ENCODE measurements at regions of chr21 and their contacts with region 1.

Region 1: DNA sequence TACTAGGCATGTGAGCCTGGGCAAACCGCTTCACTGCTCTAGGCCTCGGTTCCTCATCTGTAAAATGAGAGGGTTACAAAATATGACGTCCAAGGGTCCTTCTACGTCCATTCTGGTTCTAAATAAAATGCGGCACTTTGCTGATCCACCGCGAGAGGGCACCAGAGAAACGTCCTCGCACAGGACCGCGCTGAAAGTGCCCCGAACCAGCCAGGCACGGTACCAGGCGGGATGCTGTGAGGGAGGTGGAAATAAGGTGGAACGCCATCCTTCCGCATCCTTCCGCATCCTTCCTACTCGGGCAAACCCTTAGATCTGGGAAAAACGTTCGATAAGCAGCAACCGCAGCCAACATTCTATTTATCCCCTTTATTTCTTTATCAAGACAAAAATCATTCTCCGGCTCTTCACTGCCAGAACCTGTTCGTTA is 60.3 kb upstream of the KRTAP19-8 start:
- DNase-seq: peak; percentile 63
- H3K4me3 ChIP-seq: no peak overlapping the region
- H3K27ac ChIP-seq: no peak overlapping the region
- H3K4me1 ChIP-seq: peaks cover 0 to 8% (median 0%) of the 10 kb centered on the region in 4 donors
- H3K27me3 ChIP-seq: no peaks in the 10 kb centered on the region
- CTCF ChIP-seq: peak; percentile 59 to 84 (median 73)
- EP300 ChIP-seq: no peak
- POLR2A ChIP-seq: no peak

Region 2: GRCh38 chr21:30044445-30045064 is 1054.0 kb before region 1 on chr21:
- in situ Hi-C with region 1: loop called in 1 of 4 experiments (anchors 25 kb)
- intact Hi-C with region 1: no loop called
- DNase-seq: no peak
- H3K4me3 ChIP-seq: no peak overlapping the region
- H3K27ac ChIP-seq: no peak overlapping the region
- H3K4me1 ChIP-seq: no peaks in the 10 kb centered on the region
- H3K27me3 ChIP-seq: no peaks in the 10 kb centered on the region
- CTCF ChIP-seq: peak; percentile 65 to 88 (median 76)
- EP300 ChIP-seq: no peak
- POLR2A ChIP-seq: no peak

Region 3: DNA sequence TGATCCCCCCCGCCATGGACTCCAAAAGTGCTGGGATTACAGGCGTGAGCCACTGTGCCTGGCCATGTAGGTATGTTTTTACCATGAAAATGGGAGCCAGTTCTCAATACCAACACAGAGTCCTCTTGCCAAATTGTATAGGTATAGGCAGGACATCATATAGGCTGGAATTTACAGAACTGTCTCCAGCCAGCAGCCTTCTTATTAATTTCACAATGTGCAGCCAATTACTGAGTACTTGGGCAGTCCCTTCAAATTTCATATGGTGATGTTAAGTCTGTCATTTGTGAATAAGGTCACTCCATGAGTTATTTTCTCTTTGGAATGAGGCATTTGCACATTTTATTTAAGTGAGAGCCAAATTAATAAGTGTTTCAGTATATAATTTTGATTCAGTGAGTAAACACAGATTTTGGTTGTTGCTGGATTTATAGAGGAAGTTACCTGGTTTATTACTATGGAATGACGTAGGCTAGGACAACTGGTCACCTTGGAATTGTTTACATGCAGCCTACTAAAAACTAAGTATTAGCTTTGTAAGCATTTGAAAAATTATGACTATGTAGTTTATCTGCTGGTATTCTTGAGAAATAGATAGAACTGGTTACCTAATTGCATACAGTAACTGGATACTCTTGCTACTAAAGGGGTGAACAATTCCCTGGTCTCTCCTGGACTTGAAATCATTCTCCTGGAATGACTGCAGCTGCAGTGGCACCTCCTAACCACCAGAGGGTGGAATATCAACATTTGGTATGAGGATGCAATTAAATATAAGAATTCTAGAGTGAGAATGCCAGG is 758.0 kb before region 1 on chr21:
- in situ Hi-C with region 1: loop called in 1 of 4 experiments (anchors 25 kb)
- intact Hi-C with region 1: no loop called
- DNase-seq: peak; percentile 41
- H3K4me3 ChIP-seq: no peak overlapping the region
- H3K27ac ChIP-seq: no peak overlapping the region
- H3K4me1 ChIP-seq: no peaks in the 10 kb centered on the region
- H3K27me3 ChIP-seq: no peaks in the 10 kb centered on the region
- CTCF ChIP-seq: peak; percentile 71 to 88 (median 74)
- EP300 ChIP-seq: no peak
- POLR2A ChIP-seq: no peak

Region 4: GRCh38 chr21:31265366-31266013 is 166.9 kb after region 1 on chr21:
- in situ Hi-C with region 1: no loop called
- intact Hi-C with region 1: no loop called
- DNase-seq: no peak
- H3K4me3 ChIP-seq: no peak overlapping the region
- H3K27ac ChIP-seq: no peak overlapping the region
- H3K4me1 ChIP-seq: no peaks in the 10 kb centered on the region
- H3K27me3 ChIP-seq: no peaks in the 10 kb centered on the region
- CTCF ChIP-seq: no peak
- EP300 ChIP-seq: no peak
- POLR2A ChIP-seq: no peak

Region 5: DNA sequence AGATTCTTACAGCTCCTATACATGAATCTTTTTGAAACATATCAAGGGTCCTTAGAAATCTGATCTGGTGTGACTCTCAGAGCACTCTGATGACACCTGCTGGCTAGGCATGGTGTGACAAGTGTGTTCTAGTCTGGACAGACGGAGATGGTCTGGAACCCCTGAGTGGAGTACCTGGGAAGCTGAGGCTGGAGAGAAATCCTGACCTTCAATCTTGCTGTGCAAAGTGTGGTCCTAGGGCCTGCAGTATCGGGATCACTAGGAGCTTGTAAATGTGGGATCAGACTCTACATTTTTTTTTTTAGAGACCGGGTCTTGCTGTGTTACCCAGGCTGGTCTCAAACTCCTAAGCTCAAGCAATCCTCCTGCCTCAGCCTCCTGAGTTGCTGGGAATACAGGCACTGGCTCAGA is 482.3 kb after region 1 on chr21:
- in situ Hi-C with region 1: loop called in 1 of 4 experiments (anchors 10 kb)
- intact Hi-C with region 1: no loop called
- DNase-seq: peak; percentile 70
- H3K4me3 ChIP-seq: no peak overlapping the region
- H3K27ac ChIP-seq: no peak overlapping the region
- H3K4me1 ChIP-seq: no peaks in the 10 kb centered on the region
- H3K27me3 ChIP-seq: no peaks in the 10 kb centered on the region
- CTCF ChIP-seq: peak; percentile 70 to 81 (median 75)
- EP300 ChIP-seq: no peak
- POLR2A ChIP-seq: no peak

Region 6: GRCh38 chr21:31604591-31605190 is 506.1 kb after region 1 on chr21:
- in situ Hi-C with region 1: loop called in 3 of 4 experiments (anchors 10 kb)
- intact Hi-C with region 1: no loop called
- DNase-seq: peak; percentile 65
- H3K4me3 ChIP-seq: no peak overlapping the region
- H3K27ac ChIP-seq: no peak overlapping the region
- H3K4me1 ChIP-seq: no peaks in the 10 kb centered on the region
- H3K27me3 ChIP-seq: no peaks in the 10 kb centered on the region
- CTCF ChIP-seq: peak; percentile 78 to 91 (median 83)
- EP300 ChIP-seq: no peak
- POLR2A ChIP-seq: no peak

Measured in transverse colon (tissue), 4 donors.